Thyroid gland (tissue), 4 donors: ENCODE measurements at regions of chr9 and their contacts with region 1.

Region 1: DNA sequence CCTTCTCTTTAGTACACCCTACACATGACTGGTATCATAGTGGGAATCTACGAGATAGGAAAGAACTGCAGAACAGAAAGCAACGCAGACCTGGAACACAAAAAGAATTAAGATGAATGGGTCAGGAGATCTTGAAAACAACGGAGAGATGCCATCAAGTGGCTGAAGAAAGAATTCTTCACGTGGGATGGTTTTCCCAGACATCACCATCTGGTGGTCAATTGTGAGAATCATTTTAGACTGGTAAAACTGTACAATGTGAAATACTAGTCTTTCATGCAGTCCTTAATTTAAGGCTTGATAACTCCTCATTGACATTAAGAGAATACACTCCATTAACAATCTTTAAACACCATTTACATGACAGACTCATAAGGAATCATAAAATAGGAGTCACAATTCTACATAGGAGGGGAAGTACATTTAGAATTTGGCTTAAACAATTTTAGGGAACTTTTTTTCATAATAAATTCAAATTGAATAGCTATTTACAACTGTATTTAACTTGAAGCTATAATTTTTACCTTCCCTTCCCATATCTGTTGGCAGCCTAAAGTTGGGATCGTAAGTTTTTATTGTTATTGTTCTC is 128.4 kb upstream of the TRPM3 start:
- DNase-seq: no peak
- H3K4me3 ChIP-seq: no peak overlapping the region
- H3K27ac ChIP-seq: no peak overlapping the region
- H3K4me1 ChIP-seq: no peaks in the 10 kb centered on the region
- H3K27me3 ChIP-seq: no peaks in the 10 kb centered on the region
- CTCF ChIP-seq: peak; percentile 32 to 72 (median 59)
- POLR2A ChIP-seq: no peak

Region 2: GRCh38 chr9:70639853-70640814 is 609.7 kb before region 1 on chr9:
- intact Hi-C with region 1: loop called (anchors 10 kb)
- DNase-seq: no peak
- H3K4me3 ChIP-seq: no peak overlapping the region
- H3K27ac ChIP-seq: no peak overlapping the region
- H3K4me1 ChIP-seq: no peaks in the 10 kb centered on the region
- H3K27me3 ChIP-seq: no peaks in the 10 kb centered on the region
- CTCF ChIP-seq: peak in 5 of 6 experiments; percentile 15 to 78 (median 66)
- POLR2A ChIP-seq: no peak

Region 3: DNA sequence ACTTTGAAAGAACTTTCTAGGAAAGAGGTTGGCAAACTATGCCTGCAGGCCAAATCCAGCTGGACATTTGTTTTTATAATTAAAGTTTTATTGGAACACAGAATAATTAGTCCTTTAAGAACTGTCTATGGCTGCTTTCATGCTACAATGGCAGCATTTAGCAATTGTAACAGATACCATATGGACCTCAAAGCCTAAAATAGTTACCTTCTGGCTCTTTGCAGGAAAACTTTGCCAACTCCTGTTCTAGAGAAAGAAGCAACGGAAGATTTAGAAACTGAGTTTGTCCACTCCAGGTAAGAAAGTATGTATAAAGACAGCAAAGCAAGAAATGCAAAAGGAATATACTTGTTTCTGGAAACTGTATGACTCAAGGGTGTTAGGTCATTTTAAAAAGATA is 153.3 kb after region 1 on chr9:
- intact Hi-C with region 1: no loop called
- DNase-seq: no peak
- H3K4me3 ChIP-seq: no peak overlapping the region
- H3K27ac ChIP-seq: no peak overlapping the region
- H3K4me1 ChIP-seq: no peaks in the 10 kb centered on the region
- H3K27me3 ChIP-seq: no peaks in the 10 kb centered on the region
- CTCF ChIP-seq: no peak
- POLR2A ChIP-seq: no peak